GM12878 (cell line): ENCODE measurements at regions of chr11 and their contacts with region 1.

Region 1: GRCh38 chr11:33761471-33761870 is 12.8 kb downstream of the FBXO3 start:
- DNase-seq: no peak
- ATAC-seq: peak; percentile 98
- H3K4me3 ChIP-seq: no peak overlapping the region
- H3K27ac ChIP-seq: no peak overlapping the region
- H3K4me1 ChIP-seq: peaks cover 15% of the 10 kb centered on the region
- H3K27me3 ChIP-seq: no peaks in the 10 kb centered on the region
- CTCF ChIP-seq: no peak
- EP300 ChIP-seq: no peak
- POLR2A ChIP-seq: no peak
- RAD21 ChIP-seq: no peak

Region 2: GRCh38 chr11:33773987-33774735 is 12.7 kb after region 1 on chr11 and contains the start of gene FBXO3:
- CTCF ChIA-PET with region 1: interaction called, 15 read pairs
- POLR2A ChIA-PET with region 1: interaction called, 6 read pairs
- RAD21 ChIA-PET with region 1: interaction called, 5 read pairs
- SMC1A ChIA-PET with region 1: interaction called, 15 read pairs
- in situ Hi-C with region 1: no loop called
- intact Hi-C with region 1: no loop called
- DNase-seq: no peak
- ATAC-seq: peak; percentile 88
- H3K4me3 ChIP-seq: peak within 1 kb of the TSS; percentile 96
- H3K27ac ChIP-seq: peak within 1 kb of the TSS; percentile 26; the same call in 1 of the 2 replicates
- H3K4me1 ChIP-seq: peaks cover 21% of the 10 kb centered on the region
- H3K27me3 ChIP-seq: no peaks in the 10 kb centered on the region
- CTCF ChIP-seq: no peak
- EP300 ChIP-seq: no peak
- POLR2A ChIP-seq: peak; percentile 85
- RAD21 ChIP-seq: no peak
- polyA plus RNA-seq, gene FBXO3: 12.4 to 27.1 TPM

Region 3: GRCh38 chr11:34492806-34493414 is 731.4 kb after region 1 on chr11:
- CTCF ChIA-PET with region 1: no interaction called
- POLR2A ChIA-PET with region 1: no interaction called
- RAD21 ChIA-PET with region 1: no interaction called
- SMC1A ChIA-PET with region 1: no interaction called
- in situ Hi-C with region 1: no loop called
- intact Hi-C with region 1: no loop called
- DNase-seq: no peak
- ATAC-seq: peak; percentile 77
- H3K4me3 ChIP-seq: no peak overlapping the region
- H3K27ac ChIP-seq: no peak overlapping the region
- H3K4me1 ChIP-seq: peaks cover 4% of the 10 kb centered on the region; the same call in 1 of the 2 replicates
- H3K27me3 ChIP-seq: no peaks in the 10 kb centered on the region; a peak in 2 of 4 replicates
- CTCF ChIP-seq: peak; percentile 54 to 81 (median 64); a peak in 5 of 6 replicates
- EP300 ChIP-seq: no peak
- POLR2A ChIP-seq: no peak
- RAD21 ChIP-seq: peak; percentile 82